Esophagus muscularis mucosa (tissue), 4 donors: ENCODE measurements at regions of chr12 and their contacts with region 1.

Region 1: DNA sequence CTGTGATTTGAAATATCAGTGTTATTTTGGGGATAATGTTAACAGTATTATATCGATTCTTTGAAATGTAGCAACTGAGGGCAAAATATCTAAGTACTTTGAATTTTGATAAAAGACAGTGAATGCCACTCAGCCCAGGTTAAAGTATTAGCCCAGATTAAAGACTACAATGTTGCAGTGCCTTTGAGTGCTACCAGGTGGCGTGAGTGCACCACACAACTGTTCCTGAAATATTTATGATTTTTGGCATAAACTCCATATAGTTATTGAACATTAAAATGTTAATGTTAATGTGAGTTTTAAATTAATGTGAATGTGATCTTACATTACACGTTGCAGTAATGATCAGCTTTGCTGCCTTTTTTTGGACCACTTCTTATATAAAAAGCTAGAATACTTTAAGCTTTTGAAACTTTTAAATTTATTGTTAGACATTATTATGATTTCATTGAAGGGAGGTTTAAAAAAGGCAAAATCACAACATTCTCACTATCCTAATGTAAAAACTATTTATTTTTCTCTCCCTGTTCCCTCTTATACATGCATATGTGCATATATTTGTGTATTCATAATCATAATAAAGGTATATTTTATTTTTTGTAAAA is 22.5 kb downstream of the MRPS35 start:
- DNase-seq: no peak
- H3K4me3 ChIP-seq: no peak overlapping the region
- H3K27ac ChIP-seq: no peak overlapping the region
- H3K4me1 ChIP-seq: no peaks in the 10 kb centered on the region
- H3K27me3 ChIP-seq: no peaks in the 10 kb centered on the region
- CTCF ChIP-seq: peak; percentile 83 to 86 (median 85)
- EP300 ChIP-seq: no peak
- POLR2A ChIP-seq: no peak

Region 2: DNA sequence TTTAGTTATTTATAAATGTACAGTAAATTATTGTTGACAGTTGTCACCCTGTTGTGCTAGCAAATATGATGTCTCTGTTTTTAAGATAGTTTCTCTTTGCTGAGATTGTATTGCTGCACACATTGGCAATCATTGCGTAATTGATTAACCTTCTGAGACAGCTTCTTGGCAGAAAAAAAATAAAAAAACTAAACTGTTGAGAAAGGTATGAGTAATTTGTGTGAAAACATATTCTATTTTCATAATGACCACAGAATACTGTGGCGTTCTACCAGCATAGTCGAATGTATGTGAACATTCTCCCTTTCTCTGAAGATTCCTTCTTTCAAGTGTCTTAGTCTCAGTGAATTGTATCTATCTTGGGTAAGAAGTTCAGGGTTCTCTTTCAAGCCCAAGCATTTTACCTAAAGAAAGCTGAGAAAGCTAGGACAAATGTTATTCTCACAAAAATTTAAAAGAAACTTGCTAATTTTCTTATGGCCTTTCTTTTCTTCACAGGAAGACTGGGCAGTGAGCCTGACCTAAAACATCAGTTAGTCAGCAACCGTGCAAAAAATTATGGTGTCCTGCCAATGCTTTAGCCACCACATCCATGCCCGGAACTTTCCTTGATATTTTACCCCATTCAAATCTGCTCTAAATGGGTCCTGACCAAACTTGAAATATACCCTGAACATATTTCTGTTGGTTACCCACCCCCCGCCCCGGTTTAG is 105.9 kb before region 1 on chr12:
- intact Hi-C with region 1: no loop called
- DNase-seq: no peak
- H3K4me3 ChIP-seq: no peak overlapping the region
- H3K27ac ChIP-seq: peak overlapping the region; percentile 6 to 69 (median 44)
- H3K4me1 ChIP-seq: peaks cover 15 to 31% (median 25%) of the 10 kb centered on the region in 4 donors
- H3K27me3 ChIP-seq: no peaks in the 10 kb centered on the region
- CTCF ChIP-seq: no peak
- EP300 ChIP-seq: no peak
- POLR2A ChIP-seq: no peak

Region 3: GRCh38 chr12:27821259-27821973 is 88.3 kb after region 1 on chr12:
- intact Hi-C with region 1: loop called (anchors 2 kb)
- DNase-seq: no peak
- H3K4me3 ChIP-seq: no peak overlapping the region
- H3K27ac ChIP-seq: no peak overlapping the region
- H3K4me1 ChIP-seq: peaks cover 0 to 10% (median 2%) of the 10 kb centered on the region in 4 donors
- H3K27me3 ChIP-seq: no peaks in the 10 kb centered on the region
- CTCF ChIP-seq: peak; percentile 78 to 89 (median 87)
- EP300 ChIP-seq: no peak
- POLR2A ChIP-seq: no peak

Region 4: GRCh38 chr12:27843714-27844245 is 110.6 kb after region 1 on chr12:
- intact Hi-C with region 1: no loop called
- DNase-seq: no peak
- H3K4me3 ChIP-seq: no peak overlapping the region
- H3K27ac ChIP-seq: no peak overlapping the region
- H3K4me1 ChIP-seq: peaks cover 0 to 3% (median 1%) of the 10 kb centered on the region in 4 donors
- H3K27me3 ChIP-seq: no peaks in the 10 kb centered on the region
- CTCF ChIP-seq: no peak
- EP300 ChIP-seq: no peak
- POLR2A ChIP-seq: no peak